Activated B cell treated with CpG ODN at 0.5 μM for 24 hours (primary cell): ENCODE measurements at regions of chr12 and their contacts with region 1.

Region 1: GRCh38 chr12:50111693-50112455 is at the start of gene COX14:
- DNase-seq: peak; percentile 98
- ATAC-seq: peak; percentile 78
- H3K4me3 Mint-ChIP-seq: peak within 1 kb of the TSS; percentile 97
- H3K27ac Mint-ChIP-seq: peak within 1 kb of the TSS; percentile 95
- H3K4me1 Mint-ChIP-seq: peaks cover 66% of the 10 kb centered on the region
- H3K27me3 Mint-ChIP-seq: no peaks in the 10 kb centered on the region
- CTCF ChIP-seq: no peak
- total RNA-seq, gene COX14: 40.8 and 42.4 TPM in 2 replicates

Region 2: DNA sequence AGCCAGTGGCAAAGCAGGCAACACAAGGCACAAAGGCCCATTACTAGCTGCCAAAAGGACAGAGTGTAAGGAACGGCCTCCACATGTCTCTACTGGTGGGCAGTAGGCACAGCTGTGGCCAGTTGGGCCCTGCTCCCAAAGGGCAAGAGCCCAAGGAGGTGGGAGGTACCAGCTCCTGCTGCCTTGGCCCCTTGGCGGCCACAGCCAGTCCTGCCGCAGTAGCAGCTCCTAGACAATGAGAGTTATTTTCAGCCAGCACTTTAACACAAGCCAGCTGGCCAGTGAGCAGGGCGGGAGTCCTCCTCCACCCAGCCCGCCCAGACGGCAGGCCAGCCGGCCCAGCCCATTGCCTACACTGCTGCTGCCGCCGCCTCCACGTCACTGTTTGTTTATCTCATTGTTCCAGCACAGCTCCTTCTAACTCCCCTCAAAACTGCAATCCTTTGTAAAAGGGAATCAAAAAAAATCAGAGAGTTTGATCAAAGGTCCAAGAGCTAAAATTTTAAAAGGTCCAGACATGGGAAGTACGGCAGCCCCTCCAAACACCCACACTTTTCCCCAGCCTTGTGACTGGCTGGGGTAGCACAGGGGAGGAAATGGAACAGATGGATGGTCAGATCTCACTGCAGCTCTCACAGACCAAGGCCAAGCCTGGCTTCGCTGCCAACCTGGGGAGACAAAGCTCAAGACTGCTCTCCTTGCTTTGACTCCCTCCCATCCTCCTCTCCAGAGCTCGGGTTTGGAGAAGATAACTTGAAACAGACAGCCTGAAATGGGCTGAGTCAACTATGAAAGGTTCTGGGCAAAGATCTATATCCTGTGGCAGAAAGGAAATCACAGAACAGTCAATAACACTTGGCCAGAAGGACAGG is 438.2 kb before region 1 on chr12:
- CTCF ChIA-PET with region 1: no interaction called
- POLR2A ChIA-PET with region 1: no interaction called
- intact Hi-C with region 1: no loop called
- DNase-seq: no peak
- ATAC-seq: no peak
- H3K4me3 Mint-ChIP-seq: peak overlapping the region; percentile 52
- H3K27ac Mint-ChIP-seq: peak overlapping the region; percentile 95
- H3K4me1 Mint-ChIP-seq: peaks cover 85% of the 10 kb centered on the region
- H3K27me3 Mint-ChIP-seq: no peaks in the 10 kb centered on the region
- CTCF ChIP-seq: no peak

Region 3: DNA sequence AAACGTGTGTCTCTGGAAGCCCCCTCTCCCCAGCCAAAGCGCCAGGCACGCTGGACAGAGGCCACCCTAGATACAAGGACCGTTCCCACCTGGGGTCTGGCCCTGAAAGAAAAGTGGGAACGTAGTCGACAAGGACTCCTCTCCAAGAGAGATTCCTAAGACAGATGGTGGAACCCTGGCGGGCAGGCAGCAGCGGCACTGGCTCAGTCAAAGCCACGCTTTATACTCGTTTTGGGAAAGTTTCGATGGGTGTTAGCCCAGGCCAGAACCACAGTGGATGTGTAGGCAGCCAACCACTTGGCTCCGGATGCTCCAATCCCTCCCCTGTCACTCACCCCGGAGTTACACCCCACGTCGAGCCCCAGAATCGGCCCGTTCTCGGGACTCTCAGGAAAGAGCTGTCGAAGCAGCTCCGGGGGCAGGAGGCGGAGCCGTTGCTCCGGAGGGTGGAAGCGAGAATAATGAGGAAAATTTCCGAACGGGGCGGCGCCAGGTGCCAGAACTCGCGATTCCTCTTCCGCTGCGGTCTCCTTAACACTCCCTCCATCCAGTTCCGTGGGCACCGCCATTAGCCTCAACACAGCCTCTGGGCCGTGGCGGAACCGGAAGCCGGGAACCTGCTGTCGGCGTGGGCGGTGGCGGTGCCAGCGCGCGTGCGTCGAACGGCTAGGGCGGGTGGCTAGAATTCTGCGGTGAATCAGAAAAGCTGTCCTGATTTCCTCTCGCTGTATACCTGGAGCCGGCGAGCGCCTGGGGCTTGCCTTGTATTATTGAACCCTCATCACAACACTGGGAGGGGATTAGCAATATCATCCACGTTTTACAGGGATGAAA is 269.1 kb before region 1 on chr12 and contains the start of gene BCDIN3D:
- CTCF ChIA-PET with region 1: no interaction called
- POLR2A ChIA-PET with region 1: interaction called, 9 read pairs
- intact Hi-C with region 1: loop called (anchors 2 kb)
- DNase-seq: peak; percentile 88
- ATAC-seq: peak; percentile 90
- H3K4me3 Mint-ChIP-seq: peak within 1 kb of the TSS; percentile 93
- H3K27ac Mint-ChIP-seq: peak within 1 kb of the TSS; percentile 90
- H3K4me1 Mint-ChIP-seq: peaks cover 34% of the 10 kb centered on the region
- H3K27me3 Mint-ChIP-seq: no peaks in the 10 kb centered on the region
- CTCF ChIP-seq: no peak
- total RNA-seq, gene BCDIN3D: 10.4 and 12.0 TPM in 2 replicates

Region 4: DNA sequence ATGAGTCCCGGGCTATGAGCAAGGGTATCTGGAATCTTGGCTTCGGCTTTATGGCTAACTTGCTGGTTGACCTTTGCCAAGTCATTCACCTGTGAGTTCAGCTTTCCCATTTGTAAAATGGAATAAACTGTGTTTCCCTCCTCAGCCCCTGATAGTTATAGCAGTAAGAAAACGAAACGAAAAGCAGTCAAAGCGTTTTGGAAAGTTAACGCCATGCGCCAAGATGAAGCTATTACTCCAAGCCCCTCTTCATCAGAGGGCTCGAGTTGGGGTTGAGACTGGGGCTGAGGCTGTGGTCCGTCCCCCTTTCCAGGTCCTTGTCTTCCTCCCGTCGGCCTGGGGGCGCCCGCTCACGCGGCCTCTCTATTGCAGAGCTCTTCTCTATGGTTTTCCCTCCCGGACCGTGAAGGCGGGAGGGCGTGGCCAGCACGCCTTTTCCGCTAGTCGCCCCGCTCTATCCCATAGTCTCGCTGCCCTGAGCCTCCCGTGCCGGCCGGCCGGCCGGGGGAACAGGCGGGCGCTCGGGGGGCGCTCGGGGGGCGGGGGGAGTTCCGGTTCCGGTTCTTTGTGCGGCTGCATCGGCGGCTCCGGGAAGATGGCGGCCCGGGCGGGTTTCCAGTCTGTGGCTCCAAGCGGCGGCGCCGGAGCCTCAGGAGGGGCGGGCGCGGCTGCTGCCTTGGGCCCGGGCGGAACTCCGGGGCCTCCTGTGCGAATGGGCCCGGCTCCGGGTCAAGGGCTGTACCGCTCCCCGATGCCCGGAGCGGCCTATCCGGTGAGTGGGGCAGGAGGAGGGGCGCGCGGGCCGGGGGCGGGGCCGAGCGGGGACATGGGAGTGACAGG is 26.9 kb before region 1 on chr12 and contains the start of gene SMARCD1:
- CTCF ChIA-PET with region 1: interaction called, 48 read pairs
- POLR2A ChIA-PET with region 1: interaction called, 262 read pairs
- intact Hi-C with region 1: loop called (anchors 1 kb)
- DNase-seq: peak; percentile 82
- ATAC-seq: peak; percentile 86
- H3K4me3 Mint-ChIP-seq: peak within 1 kb of the TSS; percentile 94
- H3K27ac Mint-ChIP-seq: peak within 1 kb of the TSS; percentile 97
- H3K4me1 Mint-ChIP-seq: peaks cover 35% of the 10 kb centered on the region
- H3K27me3 Mint-ChIP-seq: no peaks in the 10 kb centered on the region
- CTCF ChIP-seq: no peak
- total RNA-seq, gene SMARCD1: 101 and 108 TPM in 2 replicates

Region 5: GRCh38 chr12:50132505-50133135 is 20.7 kb after region 1 on chr12:
- CTCF ChIA-PET with region 1: interaction called, 14 read pairs
- POLR2A ChIA-PET with region 1: interaction called, 9 read pairs
- intact Hi-C with region 1: loop called (anchors 2 kb)
- DNase-seq: no peak
- ATAC-seq: no peak
- H3K4me3 Mint-ChIP-seq: no peak overlapping the region
- H3K27ac Mint-ChIP-seq: peak overlapping the region; percentile 7
- H3K4me1 Mint-ChIP-seq: peaks cover 15% of the 10 kb centered on the region
- H3K27me3 Mint-ChIP-seq: no peaks in the 10 kb centered on the region
- CTCF ChIP-seq: no peak

Region 6: GRCh38 chr12:50167041-50167828 is 55.4 kb after region 1 on chr12 and contains the start of gene CERS5:
- CTCF ChIA-PET with region 1: interaction called, 23 read pairs
- POLR2A ChIA-PET with region 1: interaction called, 97 read pairs
- intact Hi-C with region 1: loop called (anchors 1 kb)
- DNase-seq: peak; percentile 95
- ATAC-seq: peak; percentile 98
- H3K4me3 Mint-ChIP-seq: peak within 1 kb of the TSS; percentile 92
- H3K27ac Mint-ChIP-seq: peak within 1 kb of the TSS; percentile 90
- H3K4me1 Mint-ChIP-seq: peaks cover 25% of the 10 kb centered on the region
- H3K27me3 Mint-ChIP-seq: no peaks in the 10 kb centered on the region
- CTCF ChIP-seq: no peak
- total RNA-seq, gene CERS5: 44.3 and 64.9 TPM in 2 replicates

Region 7: GRCh38 chr12:50400598-50401364 is 288.9 kb after region 1 on chr12 and contains the start of gene LARP4:
- CTCF ChIA-PET with region 1: no interaction called
- POLR2A ChIA-PET with region 1: no interaction called
- intact Hi-C with region 1: loop called (anchors 1 kb)
- DNase-seq: peak; percentile 77
- ATAC-seq: peak; percentile 94
- H3K4me3 Mint-ChIP-seq: peak within 1 kb of the TSS; percentile 97
- H3K27ac Mint-ChIP-seq: peak within 1 kb of the TSS; percentile 91
- H3K4me1 Mint-ChIP-seq: peaks cover 38% of the 10 kb centered on the region
- H3K27me3 Mint-ChIP-seq: peaks cover 5% of the 10 kb centered on the region
- CTCF ChIP-seq: no peak
- total RNA-seq, gene LARP4: 48.2 and 56.3 TPM in 2 replicates

Region 8: DNA sequence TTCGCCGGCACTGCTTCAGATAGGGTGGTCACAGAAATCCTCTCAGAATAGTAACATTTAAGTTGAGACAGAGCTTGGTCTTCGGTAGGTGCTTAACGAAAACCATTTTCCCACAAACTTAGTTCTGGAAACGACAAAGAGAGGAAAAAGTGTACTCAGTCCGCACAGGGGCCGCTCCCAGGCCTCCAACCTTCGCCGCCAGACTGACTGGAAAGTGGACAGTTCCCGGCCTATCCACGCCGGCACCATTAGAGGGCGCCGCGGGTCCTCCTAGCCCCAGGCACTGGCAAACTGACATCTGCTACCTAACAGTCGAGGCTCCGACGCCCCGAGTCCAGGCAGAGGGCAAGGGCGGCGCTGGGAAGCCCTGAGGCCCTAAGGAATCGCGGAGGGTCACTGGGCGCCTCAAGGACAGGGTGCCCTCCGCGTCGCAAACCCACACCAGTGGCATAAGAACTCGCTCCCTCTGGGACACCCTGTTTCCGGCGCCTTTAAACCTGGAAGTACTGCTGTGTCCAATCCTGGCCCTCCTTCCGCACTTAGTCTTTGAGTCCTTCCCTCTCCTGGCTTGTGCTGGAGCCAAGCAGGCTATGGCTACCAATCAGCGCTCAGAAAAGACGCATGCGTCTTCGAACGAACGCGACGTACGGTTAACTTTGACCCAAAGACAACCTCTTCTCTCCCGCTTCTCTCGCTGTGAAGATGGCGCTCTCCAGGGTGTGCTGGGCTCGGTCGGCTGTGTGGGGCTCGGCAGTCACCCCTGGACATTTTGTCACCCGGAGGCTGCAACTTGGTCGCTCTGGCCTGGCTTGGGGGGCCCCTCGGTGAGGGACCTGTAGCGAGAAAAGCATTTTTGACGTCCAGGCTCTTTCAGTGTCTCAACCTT is 936.0 kb after region 1 on chr12 and contains the start of gene LETMD1:
- CTCF ChIA-PET with region 1: no interaction called
- POLR2A ChIA-PET with region 1: no interaction called
- intact Hi-C with region 1: loop called (anchors 5 kb)
- DNase-seq: peak; percentile 81
- ATAC-seq: peak; percentile 96
- H3K4me3 Mint-ChIP-seq: peak within 1 kb of the TSS; percentile 92
- H3K27ac Mint-ChIP-seq: peak within 1 kb of the TSS; percentile 87
- H3K4me1 Mint-ChIP-seq: peaks cover 30% of the 10 kb centered on the region
- H3K27me3 Mint-ChIP-seq: no peaks in the 10 kb centered on the region
- CTCF ChIP-seq: peak; percentile 64
- total RNA-seq, gene LETMD1: 82.8 and 92.0 TPM in 2 replicates